Natural killer cell (primary cell): ENCODE measurements at regions of chr7 and their contacts with region 1.

Region 1: GRCh38 chr7:150753826-150754603 is 16.8 kb downstream of the GIMAP5 start:
- DNase-seq: peak in 1 of 2 donors; percentile 69
- ATAC-seq: peak in 2 of 3 donors; percentile 43 to 55
- H3K4me3 ChIP-seq: no peak overlapping the region
- H3K4me3 Mint-ChIP-seq: peak overlapping the region; percentile 62
- H3K27ac ChIP-seq: peak overlapping the region; percentile 71
- H3K27ac Mint-ChIP-seq: peak overlapping the region; percentile 87 to 89
- H3K4me1 ChIP-seq: peaks cover 39% of the 10 kb centered on the region
- H3K4me1 Mint-ChIP-seq: peaks cover 49 to 60% of the 10 kb centered on the region in 2 donors
- H3K27me3 ChIP-seq: no peaks in the 10 kb centered on the region
- H3K27me3 Mint-ChIP-seq: no peaks in the 10 kb centered on the region
- CTCF ChIP-seq: no peak

Region 2: GRCh38 chr7:150356265-150356897 is 397.6 kb before region 1 on chr7:
- intact Hi-C with region 1: loop called (anchors 5 kb)
- DNase-seq: peak in 1 of 2 donors; percentile 80
- ATAC-seq: peak in 1 of 3 donors; percentile 31
- H3K4me3 ChIP-seq: no peak overlapping the region
- H3K4me3 Mint-ChIP-seq: no peak overlapping the region
- H3K27ac ChIP-seq: no peak overlapping the region
- H3K27ac Mint-ChIP-seq: no peak overlapping the region
- H3K4me1 ChIP-seq: peaks cover 22% of the 10 kb centered on the region
- H3K4me1 Mint-ChIP-seq: peaks cover 33% of the 10 kb centered on the region in 2 donors
- H3K27me3 ChIP-seq: no peaks in the 10 kb centered on the region
- H3K27me3 Mint-ChIP-seq: peaks cover 0 to 5% of the 10 kb centered on the region in 2 donors
- CTCF ChIP-seq: peak; percentile 82

Region 3: DNA sequence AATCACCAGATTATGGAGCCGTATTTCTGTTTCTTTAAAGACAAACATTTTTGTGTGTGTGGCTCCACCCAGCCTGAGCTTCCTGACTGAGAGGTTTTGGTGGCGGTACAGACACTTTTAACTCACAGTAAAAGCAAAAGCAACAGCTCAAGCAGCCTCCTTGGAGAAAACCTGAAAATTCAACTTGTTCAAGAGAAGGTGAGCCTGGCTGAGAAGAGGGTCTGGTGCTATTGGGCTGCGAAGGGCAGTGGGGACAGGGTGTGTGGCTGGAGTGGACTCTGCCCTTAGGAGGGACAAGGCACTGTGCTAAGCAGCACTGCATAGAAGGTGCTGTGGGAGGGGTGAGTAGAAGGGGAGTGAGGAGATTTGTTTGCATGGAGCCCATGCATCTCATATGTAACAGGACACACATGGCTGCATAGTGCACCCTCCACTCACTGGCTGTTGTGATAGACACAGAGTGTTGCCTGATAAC is 239.2 kb before region 1 on chr7 and contains the start of gene GIMAP7:
- intact Hi-C with region 1: loop called (anchors 2 kb)
- DNase-seq: peak; percentile 46 to 83
- ATAC-seq: peak; percentile 74 to 84 (median 81)
- H3K4me3 ChIP-seq: peak within 1 kb of the TSS; percentile 83
- H3K4me3 Mint-ChIP-seq: peak within 1 kb of the TSS; percentile 100
- H3K27ac ChIP-seq: peak within 1 kb of the TSS; percentile 73
- H3K27ac Mint-ChIP-seq: peak within 1 kb of the TSS; percentile 96 to 100
- H3K4me1 ChIP-seq: peaks cover 34% of the 10 kb centered on the region
- H3K4me1 Mint-ChIP-seq: peaks cover 58 to 65% of the 10 kb centered on the region in 2 donors
- H3K27me3 ChIP-seq: no peaks in the 10 kb centered on the region
- H3K27me3 Mint-ChIP-seq: no peaks in the 10 kb centered on the region
- CTCF ChIP-seq: no peak
- total RNA-seq, gene GIMAP7: 66.3 to 100 (median 67.6) TPM

Region 4: DNA sequence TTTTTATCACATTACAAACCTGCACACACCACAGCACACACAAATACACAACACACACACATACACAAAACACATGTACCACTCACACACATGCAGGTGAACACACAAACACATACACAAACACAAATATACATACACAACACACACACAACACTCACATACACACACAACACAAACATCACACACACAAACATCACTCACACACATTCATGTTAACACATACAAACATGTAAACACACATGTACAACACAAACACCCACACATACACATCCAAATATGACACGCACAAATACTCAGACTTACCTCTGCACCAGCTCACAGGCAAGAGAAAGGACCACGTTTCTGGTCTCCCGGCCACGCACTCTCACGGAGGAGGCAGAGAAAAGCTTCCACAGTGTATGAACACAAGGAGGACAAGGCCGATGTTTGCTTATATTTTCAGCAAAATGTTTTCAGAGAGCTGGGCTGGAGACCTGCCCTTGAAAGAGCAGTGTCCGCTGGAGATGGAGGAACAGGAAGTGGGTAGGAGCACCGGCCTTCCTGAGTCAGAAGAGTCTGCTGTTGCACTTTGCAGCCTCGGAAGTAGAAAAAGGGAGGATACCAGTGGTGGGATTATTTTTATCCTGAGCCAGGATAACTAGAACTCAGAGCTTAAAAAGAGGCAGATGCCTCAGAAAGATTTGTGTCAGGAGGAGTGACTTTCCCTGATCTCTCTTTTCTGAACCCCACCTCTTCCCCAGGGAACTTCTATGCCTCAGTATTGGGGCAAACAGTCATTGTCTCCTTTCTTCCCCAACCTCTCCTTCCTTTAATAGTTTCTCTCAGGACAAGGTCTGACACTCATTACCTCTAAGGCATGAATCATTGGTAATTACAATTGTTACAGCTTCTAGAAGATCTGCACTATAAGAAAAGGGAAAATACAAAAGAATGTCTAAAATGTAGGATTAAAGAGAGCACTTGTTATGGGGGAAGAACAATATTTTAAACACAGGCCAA is 121.8 kb before region 1 on chr7 and contains the start of gene GIMAP6:
- intact Hi-C with region 1: loop called (anchors 5 kb)
- DNase-seq: peak in 1 of 2 donors; percentile 68
- ATAC-seq: peak; percentile 66 to 76 (median 66)
- H3K4me3 ChIP-seq: peak within 1 kb of the TSS; percentile 61
- H3K4me3 Mint-ChIP-seq: peak within 1 kb of the TSS; percentile 86
- H3K27ac ChIP-seq: peak within 1 kb of the TSS; percentile 79
- H3K27ac Mint-ChIP-seq: peak within 1 kb of the TSS; percentile 72 to 93
- H3K4me1 ChIP-seq: peaks cover 52% of the 10 kb centered on the region
- H3K4me1 Mint-ChIP-seq: peaks cover 56 to 79% of the 10 kb centered on the region in 2 donors
- H3K27me3 ChIP-seq: no peaks in the 10 kb centered on the region
- H3K27me3 Mint-ChIP-seq: no peaks in the 10 kb centered on the region
- CTCF ChIP-seq: no peak
- total RNA-seq, gene GIMAP6: 39.7 to 100 (median 51.9) TPM

Region 5: DNA sequence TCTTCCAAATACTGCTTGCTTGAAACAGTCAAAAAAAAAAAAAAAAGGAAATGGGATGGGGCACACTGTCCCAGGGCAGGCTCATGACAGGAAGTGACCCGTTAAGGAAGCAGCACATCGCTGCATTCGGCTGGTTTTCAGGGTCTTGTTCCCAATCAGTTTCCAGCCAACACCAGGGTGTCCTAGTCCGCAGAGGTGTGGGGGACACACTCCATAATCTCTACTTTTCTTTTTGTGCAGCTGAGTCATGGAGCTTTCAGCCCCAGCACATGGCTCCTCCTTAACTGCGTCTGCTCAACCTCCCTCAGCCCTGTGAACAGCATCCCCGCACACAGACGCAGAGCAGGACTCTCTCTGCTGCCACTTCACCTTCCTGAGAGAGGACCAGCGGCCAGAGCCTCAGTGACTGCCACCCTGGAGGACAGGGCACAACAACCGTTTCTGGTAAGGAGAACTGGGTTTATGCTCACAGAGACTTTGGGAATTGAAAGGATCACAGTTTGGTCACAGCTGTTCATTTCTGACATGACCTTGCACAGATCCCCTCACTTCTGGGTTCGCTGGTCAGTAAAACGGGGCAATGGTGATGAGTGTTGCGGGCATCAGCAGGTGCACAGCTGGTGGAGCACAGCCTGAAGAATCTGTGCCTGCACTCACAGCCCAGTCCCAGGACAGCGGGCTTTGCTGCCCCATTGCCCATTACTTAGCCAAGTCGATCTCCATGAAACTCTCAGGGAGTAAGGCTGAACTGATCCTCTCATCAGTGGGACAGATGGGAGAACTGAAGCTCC is 16.6 kb before region 1 on chr7 and contains the start of gene GIMAP5:
- intact Hi-C with region 1: loop called (anchors 2 kb)
- DNase-seq: peak; percentile 51 to 71
- ATAC-seq: peak; percentile 85 to 88 (median 85)
- H3K4me3 ChIP-seq: peak within 1 kb of the TSS; percentile 84
- H3K4me3 Mint-ChIP-seq: peak within 1 kb of the TSS; percentile 91
- H3K27ac ChIP-seq: peak within 1 kb of the TSS; percentile 64
- H3K27ac Mint-ChIP-seq: peak within 1 kb of the TSS; percentile 86 to 91
- H3K4me1 ChIP-seq: peaks cover 35% of the 10 kb centered on the region
- H3K4me1 Mint-ChIP-seq: peaks cover 66 to 73% of the 10 kb centered on the region in 2 donors
- H3K27me3 ChIP-seq: no peaks in the 10 kb centered on the region
- H3K27me3 Mint-ChIP-seq: no peaks in the 10 kb centered on the region
- CTCF ChIP-seq: no peak
- total RNA-seq, gene GIMAP5: 29.2 to 64.1 (median 35.3) TPM

Region 6: GRCh38 chr7:150941981-150942590 is 188.1 kb after region 1 on chr7:
- intact Hi-C with region 1: no loop called
- DNase-seq: peak in 1 of 2 donors; percentile 60
- ATAC-seq: peak; percentile 58 to 85 (median 84)
- H3K4me3 ChIP-seq: no peak overlapping the region
- H3K4me3 Mint-ChIP-seq: no peak overlapping the region
- H3K27ac ChIP-seq: no peak overlapping the region
- H3K27ac Mint-ChIP-seq: no peak overlapping the region
- H3K4me1 ChIP-seq: peaks cover 28% of the 10 kb centered on the region
- H3K4me1 Mint-ChIP-seq: peaks cover 11 to 19% of the 10 kb centered on the region in 2 donors
- H3K27me3 ChIP-seq: no peaks in the 10 kb centered on the region
- H3K27me3 Mint-ChIP-seq: peaks cover 14 to 16% of the 10 kb centered on the region in 2 donors
- CTCF ChIP-seq: no peak